Endothelial cell of umbilical vein (primary cell): ENCODE measurements at regions of chrX and their contacts with region 1.

Region 1: DNA sequence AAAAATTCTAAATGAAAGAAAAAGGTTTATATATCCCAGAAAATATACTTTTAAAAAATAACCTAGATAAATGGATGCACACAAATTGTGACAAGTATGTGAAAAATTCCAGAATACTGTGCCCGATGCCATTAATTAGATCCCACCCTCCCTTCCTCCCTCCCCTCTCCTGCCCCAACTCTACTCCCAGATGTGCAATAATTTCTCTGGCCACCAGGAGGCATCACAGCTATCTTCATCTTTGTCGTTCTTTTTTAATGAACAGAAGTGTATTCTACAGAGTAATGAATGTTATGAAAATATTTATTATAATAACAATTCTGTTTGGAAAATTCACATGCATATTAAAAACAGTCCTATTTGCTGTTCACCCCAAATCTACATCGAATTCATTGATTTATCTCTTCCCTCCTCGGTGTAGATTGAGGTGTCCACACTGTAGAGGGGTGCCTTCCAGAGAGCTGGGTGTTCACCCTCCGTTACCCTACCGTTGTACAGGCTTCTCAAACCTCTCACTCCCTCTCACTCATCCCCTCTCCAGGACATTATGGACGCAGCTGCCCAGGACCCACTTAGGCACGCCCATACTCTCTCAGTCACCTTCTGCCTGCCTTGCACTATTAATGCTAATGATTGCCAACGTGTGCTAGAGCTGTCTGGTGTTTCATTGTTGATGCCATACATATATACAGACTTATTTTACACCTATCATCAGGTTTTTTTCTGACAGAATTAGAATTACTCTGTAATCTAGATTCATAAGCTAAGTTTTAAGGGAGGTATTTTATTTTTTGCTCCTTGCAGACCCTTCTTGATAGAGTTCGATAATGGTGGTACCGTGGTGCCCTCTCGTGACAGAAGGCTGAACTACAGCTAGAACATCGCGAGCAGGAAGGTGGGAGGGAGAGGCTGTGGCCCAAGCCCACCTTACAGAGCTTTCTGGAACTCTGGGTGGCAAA is 14.1 kb downstream of the RAB40AL start:
- DNase-seq: peak; percentile 68
- H3K4me3 ChIP-seq: peak overlapping the region in 1 of 3 experiments; percentile 35
- H3K27ac ChIP-seq: no peak overlapping the region
- H3K4me1 ChIP-seq: peaks cover 4% of the 10 kb centered on the region
- H3K27me3 ChIP-seq: no peaks in the 10 kb centered on the region
- CTCF ChIP-seq: peak; percentile 48 to 57
- POLR2A ChIP-seq: no peak

Region 2: GRCh38 chrX:102899940-102900916 is 51.0 kb before region 1 on chrX:
- CTCF ChIA-PET with region 1: interaction called, 12 read pairs
- POLR2A ChIA-PET with region 1: no interaction called
- dilution Hi-C with region 1: no loop called
- intact Hi-C with region 1: no loop called
- DNase-seq: peak; percentile 72
- H3K4me3 ChIP-seq: no peak overlapping the region
- H3K27ac ChIP-seq: no peak overlapping the region
- H3K4me1 ChIP-seq: no peaks in the 10 kb centered on the region
- H3K27me3 ChIP-seq: no peaks in the 10 kb centered on the region
- CTCF ChIP-seq: peak; percentile 50 to 52
- POLR2A ChIP-seq: no peak

Region 3: DNA sequence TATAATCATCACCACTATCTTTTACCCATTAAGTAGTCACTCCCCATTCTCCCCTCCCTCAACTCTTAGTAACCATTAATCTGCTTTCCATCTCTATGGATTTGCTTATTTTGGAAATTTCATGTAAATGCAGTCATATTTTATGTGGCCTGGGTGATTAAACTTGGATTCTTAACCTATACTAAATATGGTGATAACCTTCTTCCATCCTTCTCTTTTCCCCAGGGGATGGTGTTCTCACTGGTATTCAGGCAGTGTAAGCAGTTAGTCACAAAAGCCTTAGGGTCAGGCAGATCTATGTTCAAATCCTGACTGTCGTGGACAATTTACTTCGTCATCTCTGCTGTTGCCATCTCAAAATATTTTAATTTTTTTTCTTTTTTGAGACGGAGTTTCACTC is 15.5 kb after region 1 on chrX:
- CTCF ChIA-PET with region 1: interaction called, 37 read pairs
- POLR2A ChIA-PET with region 1: no interaction called
- dilution Hi-C with region 1: no loop called
- intact Hi-C with region 1: no loop called
- DNase-seq: no peak
- H3K4me3 ChIP-seq: no peak overlapping the region
- H3K27ac ChIP-seq: no peak overlapping the region
- H3K4me1 ChIP-seq: no peaks in the 10 kb centered on the region
- H3K27me3 ChIP-seq: no peaks in the 10 kb centered on the region
- CTCF ChIP-seq: no peak
- POLR2A ChIP-seq: no peak

Region 4: GRCh38 chrX:103002576-103002975 is 51.4 kb after region 1 on chrX:
- CTCF ChIA-PET with region 1: no interaction called
- POLR2A ChIA-PET with region 1: no interaction called
- dilution Hi-C with region 1: no loop called
- intact Hi-C with region 1: no loop called
- DNase-seq: no peak
- H3K4me3 ChIP-seq: no peak overlapping the region
- H3K27ac ChIP-seq: no peak overlapping the region
- H3K4me1 ChIP-seq: no peaks in the 10 kb centered on the region
- H3K27me3 ChIP-seq: no peaks in the 10 kb centered on the region
- CTCF ChIP-seq: no peak
- POLR2A ChIP-seq: no peak

Region 5: GRCh38 chrX:103175944-103176753 is 225.0 kb after region 1 on chrX:
- CTCF ChIA-PET with region 1: interaction called, 68 read pairs
- POLR2A ChIA-PET with region 1: no interaction called
- dilution Hi-C with region 1: no loop called
- intact Hi-C with region 1: loop called (anchors 1 kb)
- DNase-seq: peak; percentile 62
- H3K4me3 ChIP-seq: no peak overlapping the region
- H3K27ac ChIP-seq: no peak overlapping the region
- H3K4me1 ChIP-seq: no peaks in the 10 kb centered on the region
- H3K27me3 ChIP-seq: no peaks in the 10 kb centered on the region
- CTCF ChIP-seq: peak; percentile 60 to 68
- POLR2A ChIP-seq: no peak